Natural killer cell (primary cell): ENCODE measurements at regions of chr1 and their contacts with region 1.

Region 1: DNA sequence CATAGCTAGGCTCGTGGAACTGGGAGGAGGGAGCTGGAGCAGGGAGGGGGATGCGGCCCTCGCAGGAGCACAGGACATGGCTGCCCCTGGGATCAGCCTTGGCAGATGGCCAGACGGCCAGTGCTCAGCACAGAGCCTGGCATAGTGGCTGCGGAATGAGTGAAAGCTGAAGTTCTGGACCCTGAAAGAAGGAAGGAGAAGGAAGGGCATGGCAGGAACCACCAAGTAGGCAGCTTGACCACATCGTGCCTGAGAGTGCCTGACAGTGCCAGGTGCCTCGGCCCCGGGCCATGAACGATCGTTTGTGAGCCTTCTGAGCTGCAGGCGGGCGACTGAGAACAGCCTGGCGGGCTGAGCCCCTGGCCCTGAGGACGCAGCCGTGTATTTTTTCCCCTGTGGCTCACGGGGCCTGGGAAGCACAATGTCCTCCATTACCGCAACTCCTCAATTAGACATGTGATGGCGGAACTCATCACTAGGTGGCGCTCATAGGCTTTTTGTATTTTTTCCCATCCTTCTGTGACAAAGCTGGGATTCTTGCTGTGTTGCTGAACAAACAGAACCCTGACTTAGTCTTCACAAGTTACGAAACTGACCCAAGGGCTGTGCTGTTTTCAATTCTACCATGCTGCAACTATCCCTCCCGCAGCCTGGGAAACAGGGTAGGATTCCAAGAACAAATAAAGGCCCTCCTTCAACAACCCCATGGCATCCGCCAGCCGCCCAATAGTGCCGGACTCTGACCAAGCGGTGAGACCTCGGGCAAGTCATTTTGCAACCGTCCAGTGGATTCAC is 29.9 kb upstream of the TMEM61 start:
- DNase-seq: peak; percentile 38 to 72
- ATAC-seq: peak; percentile 59 to 70 (median 70)
- H3K4me3 ChIP-seq: no peak overlapping the region
- H3K4me3 Mint-ChIP-seq: no peak overlapping the region
- H3K27ac ChIP-seq: no peak overlapping the region
- H3K27ac Mint-ChIP-seq: no peak overlapping the region
- H3K4me1 ChIP-seq: peaks cover 8% of the 10 kb centered on the region
- H3K4me1 Mint-ChIP-seq: peaks cover 11 to 13% of the 10 kb centered on the region in 2 donors
- H3K27me3 ChIP-seq: no peaks in the 10 kb centered on the region
- H3K27me3 Mint-ChIP-seq: peaks cover under 1 to 6% of the 10 kb centered on the region in 2 donors
- CTCF ChIP-seq: peak; percentile 66

Region 2: GRCh38 chr1:54996359-54996868 is 45.8 kb after region 1 on chr1:
- intact Hi-C with region 1: loop called (anchors 1 kb)
- DNase-seq: peak; percentile 79 to 88
- ATAC-seq: peak; percentile 83 to 86 (median 83)
- H3K4me3 ChIP-seq: no peak overlapping the region
- H3K4me3 Mint-ChIP-seq: peak overlapping the region; percentile 62
- H3K27ac ChIP-seq: no peak overlapping the region
- H3K27ac Mint-ChIP-seq: peak overlapping the region; percentile 52 to 74
- H3K4me1 ChIP-seq: peaks cover 21% of the 10 kb centered on the region
- H3K4me1 Mint-ChIP-seq: peaks cover 20 to 23% of the 10 kb centered on the region in 2 donors
- H3K27me3 ChIP-seq: peaks cover 15% of the 10 kb centered on the region
- H3K27me3 Mint-ChIP-seq: peaks cover 24 to 26% of the 10 kb centered on the region in 2 donors
- CTCF ChIP-seq: peak; percentile 74

Region 3: GRCh38 chr1:55337801-55338447 is 387.4 kb after region 1 on chr1:
- intact Hi-C with region 1: loop called (anchors 1 kb)
- DNase-seq: peak in 1 of 2 donors; percentile 32
- ATAC-seq: peak in 2 of 3 donors; percentile 51 to 57
- H3K4me3 ChIP-seq: no peak overlapping the region
- H3K4me3 Mint-ChIP-seq: no peak overlapping the region
- H3K27ac ChIP-seq: no peak overlapping the region
- H3K27ac Mint-ChIP-seq: no peak overlapping the region
- H3K4me1 ChIP-seq: no peaks in the 10 kb centered on the region
- H3K4me1 Mint-ChIP-seq: peaks cover 0 to 7% of the 10 kb centered on the region in 2 donors
- H3K27me3 ChIP-seq: no peaks in the 10 kb centered on the region
- H3K27me3 Mint-ChIP-seq: peaks cover 0 to 9% of the 10 kb centered on the region in 2 donors
- CTCF ChIP-seq: peak; percentile 51